Kidney (tissue), 22 donors: ENCODE measurements at regions of chr6 and their contacts with region 1.

Region 1: GRCh38 chr6:90393232-90393884 is 96.7 kb upstream of the BACH2 start:
- DNase-seq: peak in 4 of 5 donors; percentile 71 to 84 (median 80)
- H3K4me3 ChIP-seq: no peak overlapping the region
- H3K27ac ChIP-seq: no peak overlapping the region
- H3K4me1 ChIP-seq: no peaks in the 10 kb centered on the region
- H3K27me3 ChIP-seq: no peaks in the 10 kb centered on the region
- CTCF ChIP-seq: peak; percentile 73

Region 2: GRCh38 chr6:89711801-89712200 is 681.6 kb before region 1 on chr6:
- intact Hi-C with region 1: no loop called
- DNase-seq: peak in 2 of 5 donors; percentile 6 to 42
- H3K4me3 ChIP-seq: no peak overlapping the region
- H3K27ac ChIP-seq: no peak overlapping the region
- H3K4me1 ChIP-seq: no peaks in the 10 kb centered on the region
- H3K27me3 ChIP-seq: no peaks in the 10 kb centered on the region
- CTCF ChIP-seq: no peak

Region 3: GRCh38 chr6:89970609-89971337 is 422.6 kb before region 1 on chr6:
- intact Hi-C with region 1: loop called (anchors 10 kb)
- DNase-seq: peak in 4 of 5 donors; percentile 57 to 88 (median 72)
- H3K4me3 ChIP-seq: no peak overlapping the region
- H3K27ac ChIP-seq: no peak overlapping the region
- H3K4me1 ChIP-seq: peaks cover 0 to 3% (median 0%) of the 10 kb centered on the region in 3 donors
- H3K27me3 ChIP-seq: no peaks in the 10 kb centered on the region
- CTCF ChIP-seq: peak; percentile 51

Region 4: DNA sequence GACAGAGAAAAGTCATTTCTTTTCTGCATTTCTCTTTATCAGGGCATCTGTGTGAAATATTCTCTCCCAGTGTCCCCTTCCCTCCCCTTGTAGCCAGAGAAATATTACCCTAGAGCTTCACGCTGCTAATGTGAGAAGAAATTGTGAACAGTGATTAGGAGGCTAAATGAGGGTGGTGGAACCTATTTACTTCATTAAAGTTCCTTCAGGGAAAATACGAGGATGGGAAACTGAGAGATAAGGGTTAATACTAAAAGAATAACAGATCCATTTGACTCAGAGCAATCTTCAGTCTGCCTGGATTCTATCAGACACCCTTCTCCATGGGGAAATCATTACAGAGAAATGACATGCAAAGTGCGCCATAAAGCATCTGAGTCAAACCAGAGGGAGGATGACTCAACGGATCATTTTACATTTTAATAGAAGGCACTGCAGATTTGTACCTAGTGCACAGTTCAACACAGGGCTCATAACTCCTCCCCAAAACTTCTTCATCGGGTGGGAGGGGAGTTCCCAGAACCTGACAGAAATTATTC is 367.8 kb before region 1 on chr6:
- intact Hi-C with region 1: no loop called
- DNase-seq: peak in 2 of 5 donors; percentile 38 to 39
- H3K4me3 ChIP-seq: no peak overlapping the region
- H3K27ac ChIP-seq: no peak overlapping the region
- H3K4me1 ChIP-seq: no peaks in the 10 kb centered on the region
- H3K27me3 ChIP-seq: no peaks in the 10 kb centered on the region
- CTCF ChIP-seq: no peak

Region 5: GRCh38 chr6:90263633-90264032 is 129.7 kb before region 1 on chr6:
- intact Hi-C with region 1: no loop called
- DNase-seq: no peak
- H3K4me3 ChIP-seq: no peak overlapping the region
- H3K27ac ChIP-seq: no peak overlapping the region
- H3K4me1 ChIP-seq: no peaks in the 10 kb centered on the region
- H3K27me3 ChIP-seq: no peaks in the 10 kb centered on the region
- CTCF ChIP-seq: no peak